ENCODE measurements at regions of chr11 and their contacts with region 1.

Region 1: DNA sequence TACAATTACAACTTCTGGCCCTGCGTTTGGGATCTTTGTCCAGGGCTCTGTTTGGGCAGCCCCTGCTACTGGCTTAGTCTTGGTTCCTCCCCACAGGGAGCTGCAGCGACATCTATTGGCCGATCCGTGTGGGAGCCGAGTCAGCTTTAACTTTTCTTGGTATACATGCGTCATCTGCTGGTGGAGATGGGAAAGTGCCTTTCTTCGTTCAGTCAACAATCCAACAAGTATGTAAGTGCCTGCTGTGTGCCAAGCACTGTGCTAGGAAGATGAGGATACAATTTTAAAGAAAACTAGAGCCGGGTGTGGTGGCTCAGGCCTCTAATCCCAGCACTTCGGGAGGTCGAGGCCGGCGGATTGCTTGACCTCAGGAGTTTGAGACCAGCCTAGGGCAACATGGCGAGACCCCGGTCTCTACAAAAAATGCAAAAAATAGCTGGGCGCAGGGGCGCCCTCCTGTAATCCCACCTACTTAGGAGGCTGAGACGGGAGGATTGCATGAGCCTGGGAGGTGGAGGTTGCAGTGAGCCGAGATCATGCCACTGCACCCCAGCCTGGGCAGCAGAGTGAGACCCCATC is 8.2 kb downstream of the TPBGL start:
- DNase-seq: peak; percentile 82 to 92 (median 89)
- ATAC-seq: peak; percentile 99
- H3K4me3 ChIP-seq: no peak overlapping the region
- H3K27ac ChIP-seq: no peak overlapping the region
- H3K4me1 ChIP-seq: no peaks in the 10 kb centered on the region
- H3K27me3 ChIP-seq: peaks cover 2 to 32% of the 10 kb centered on the region in 2 donors
- CTCF ChIP-seq: peak; percentile 90 to 98

Region 2: GRCh38 chr11:74929431-74930363 is 319.1 kb before region 1 on chr11:
- intact Hi-C with region 1: loop called in 1 of 2 experiments (anchors 5 kb)
- DNase-seq: peak in 3 of 4 donors; percentile 46 to 89 (median 59)
- ATAC-seq: peak; percentile 96
- H3K4me3 ChIP-seq: no peak overlapping the region
- H3K27ac ChIP-seq: no peak overlapping the region
- H3K4me1 ChIP-seq: no peaks in the 10 kb centered on the region
- H3K27me3 ChIP-seq: no peaks in the 10 kb centered on the region
- CTCF ChIP-seq: peak; percentile 75 to 78

Region 3: GRCh38 chr11:75024764-75025211 is 224.0 kb before region 1 on chr11:
- intact Hi-C with region 1: loop called in 1 of 2 experiments (anchors 5 kb)
- DNase-seq: no peak
- ATAC-seq: no peak
- H3K4me3 ChIP-seq: no peak overlapping the region
- H3K27ac ChIP-seq: no peak overlapping the region
- H3K4me1 ChIP-seq: no peaks in the 10 kb centered on the region
- H3K27me3 ChIP-seq: no peaks in the 10 kb centered on the region
- CTCF ChIP-seq: no peak

Region 4: GRCh38 chr11:75142714-75143419 is 105.9 kb before region 1 on chr11:
- intact Hi-C with region 1: loop called in 1 of 2 experiments (anchors 5 kb)
- DNase-seq: peak in 2 of 4 donors; percentile 85 to 89
- ATAC-seq: peak; percentile 84
- H3K4me3 ChIP-seq: no peak overlapping the region
- H3K27ac ChIP-seq: peak overlapping the region; percentile 59 to 70
- H3K4me1 ChIP-seq: peaks cover 8 to 53% of the 10 kb centered on the region in 2 donors
- H3K27me3 ChIP-seq: peaks cover 0 to 21% of the 10 kb centered on the region in 2 donors
- CTCF ChIP-seq: peak in 1 of 2 donors; percentile 23